ENCODE measurements at regions of chr12 and their contacts with region 1.

Region 1: DNA sequence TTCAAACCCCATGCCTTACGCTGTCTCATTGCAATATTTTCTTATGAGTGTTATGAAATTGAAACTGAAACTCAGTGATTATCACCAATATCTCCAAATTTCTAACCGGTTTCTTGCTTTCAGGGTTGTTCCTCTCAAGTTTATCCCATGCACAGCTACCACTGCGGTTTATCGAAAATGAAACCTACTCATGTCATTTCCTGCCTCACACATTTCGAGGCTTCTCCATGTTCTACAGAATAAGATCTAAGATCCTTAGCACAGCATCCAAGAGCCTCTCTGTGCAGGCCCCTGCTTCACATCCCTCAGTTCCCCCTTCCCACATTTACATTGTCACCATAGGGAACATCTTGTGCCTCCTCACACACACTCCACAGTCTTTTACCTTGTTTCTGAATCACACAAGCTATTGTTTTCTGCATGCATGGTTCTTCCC is 45.5 kb upstream of the FAR2 start:
- DNase-seq: peak; percentile 66
- ATAC-seq: peak; percentile 92
- H3K4me3 Mint-ChIP-seq: peak overlapping the region; percentile 35
- H3K27ac Mint-ChIP-seq: peak overlapping the region; percentile 86
- H3K4me1 Mint-ChIP-seq: peaks cover 32% of the 10 kb centered on the region
- H3K27me3 Mint-ChIP-seq: no peaks in the 10 kb centered on the region
- CTCF ChIP-seq: no peak

Region 2: DNA sequence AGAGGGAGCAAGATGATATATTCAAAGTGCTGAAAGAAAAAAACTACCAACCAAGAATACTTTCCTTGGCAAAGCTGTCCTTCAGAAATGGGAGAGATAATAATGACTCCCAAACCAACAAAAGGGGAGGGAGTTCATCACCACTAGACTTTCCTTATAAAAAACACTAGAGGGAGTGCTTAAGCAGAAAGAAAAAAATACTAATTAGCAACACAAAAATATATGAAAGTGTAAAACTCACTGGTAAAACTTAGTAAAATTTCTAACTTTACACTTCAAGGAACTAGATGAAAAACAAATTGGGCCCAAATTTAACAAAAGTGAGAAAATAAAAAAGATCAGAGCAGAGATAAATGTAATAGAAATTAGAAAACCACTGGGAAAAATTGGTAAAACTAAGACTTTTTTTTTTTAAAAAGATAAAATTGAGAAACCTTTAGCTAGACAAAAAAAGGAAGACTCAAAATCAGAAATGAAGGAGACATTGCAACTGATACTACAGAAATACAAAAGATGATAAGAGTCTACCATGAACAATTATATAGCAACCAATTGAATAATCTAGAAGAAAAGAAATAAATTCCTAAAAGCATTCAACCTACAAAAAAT is 14.8 kb before region 1 on chr12:
- CTCF ChIA-PET with region 1: interaction called, 14 read pairs
- POLR2A ChIA-PET with region 1: no interaction called
- intact Hi-C with region 1: no loop called
- DNase-seq: no peak
- ATAC-seq: no peak
- H3K4me3 Mint-ChIP-seq: no peak overlapping the region
- H3K27ac Mint-ChIP-seq: no peak overlapping the region
- H3K4me1 Mint-ChIP-seq: no peaks in the 10 kb centered on the region
- H3K27me3 Mint-ChIP-seq: no peaks in the 10 kb centered on the region
- CTCF ChIP-seq: peak; percentile 62

Region 3: GRCh38 chr12:29148911-29149690 is 45.5 kb after region 1 on chr12 and contains the start of gene FAR2:
- CTCF ChIA-PET with region 1: no interaction called
- POLR2A ChIA-PET with region 1: interaction called, 3 read pairs
- intact Hi-C with region 1: loop called (anchors 5 kb)
- DNase-seq: peak; percentile 58
- ATAC-seq: peak; percentile 85
- H3K4me3 Mint-ChIP-seq: peak within 1 kb of the TSS; percentile 88
- H3K27ac Mint-ChIP-seq: peak within 1 kb of the TSS; percentile 91
- H3K4me1 Mint-ChIP-seq: peaks cover 7% of the 10 kb centered on the region
- H3K27me3 Mint-ChIP-seq: peaks cover 17% of the 10 kb centered on the region
- CTCF ChIP-seq: no peak
- total RNA-seq, gene FAR2: 6.0 to 7.0 TPM